Aorta (tissue), 5 donors: ENCODE measurements at regions of chr3 and their contacts with region 1.

Region 1: GRCh38 chr3:160754855-160755747 is 930 bp upstream of the PPM1L start:
- DNase-seq: peak; percentile 96 to 97
- ATAC-seq: peak; percentile 96
- H3K4me3 ChIP-seq: peak overlapping the region; percentile 65 to 93
- H3K27ac ChIP-seq: peak overlapping the region; percentile 70 to 76
- H3K4me1 ChIP-seq: no peaks in the 10 kb centered on the region
- H3K27me3 ChIP-seq: no peaks in the 10 kb centered on the region

Region 2: GRCh38 chr3:160565442-160566403 is 189.4 kb before region 1 on chr3 and contains the start of gene KPNA4:
- intact Hi-C with region 1: loop called (anchors 10 kb)
- DNase-seq: peak; percentile 99
- ATAC-seq: peak; percentile 99
- H3K4me3 ChIP-seq: peak within 1 kb of the TSS; percentile 84 to 95
- H3K27ac ChIP-seq: peak within 1 kb of the TSS; percentile 94 to 96
- H3K4me1 ChIP-seq: no peaks in the 10 kb centered on the region
- H3K27me3 ChIP-seq: no peaks in the 10 kb centered on the region
- total RNA-seq, gene KPNA4: 58.1 to 61.1 TPM

Region 3: GRCh38 chr3:160801386-160802118 is 46.5 kb after region 1 on chr3:
- intact Hi-C with region 1: loop called in 1 of 2 experiments (anchors 5 kb)
- DNase-seq: peak in 1 of 2 donors; percentile 73
- ATAC-seq: peak; percentile 81
- H3K4me3 ChIP-seq: peak overlapping the region in 1 of 2 donors; percentile 47
- H3K27ac ChIP-seq: peak overlapping the region in 1 of 2 donors; percentile 23
- H3K4me1 ChIP-seq: no peaks in the 10 kb centered on the region
- H3K27me3 ChIP-seq: no peaks in the 10 kb centered on the region

Region 4: GRCh38 chr3:160810362-160811236 is 55.5 kb after region 1 on chr3:
- intact Hi-C with region 1: loop called in 1 of 2 experiments (anchors 5 kb)
- DNase-seq: peak in 1 of 2 donors; percentile 62
- ATAC-seq: peak; percentile 80
- H3K4me3 ChIP-seq: no peak overlapping the region
- H3K27ac ChIP-seq: peak overlapping the region in 1 of 2 donors; percentile 73
- H3K4me1 ChIP-seq: peaks cover 6 to 20% of the 10 kb centered on the region in 2 donors
- H3K27me3 ChIP-seq: no peaks in the 10 kb centered on the region

Region 5: GRCh38 chr3:160869818-160870217 is 114.7 kb after region 1 on chr3:
- intact Hi-C with region 1: loop called in 1 of 2 experiments (anchors 5 kb)
- DNase-seq: no peak
- ATAC-seq: peak; percentile 76
- H3K4me3 ChIP-seq: no peak overlapping the region
- H3K27ac ChIP-seq: no peak overlapping the region
- H3K4me1 ChIP-seq: peaks cover 0 to 5% of the 10 kb centered on the region in 2 donors
- H3K27me3 ChIP-seq: no peaks in the 10 kb centered on the region